Astrocyte of the cerebellum (primary cell): ENCODE measurements at regions of chr9 and their contacts with region 1.

Region 1: DNA sequence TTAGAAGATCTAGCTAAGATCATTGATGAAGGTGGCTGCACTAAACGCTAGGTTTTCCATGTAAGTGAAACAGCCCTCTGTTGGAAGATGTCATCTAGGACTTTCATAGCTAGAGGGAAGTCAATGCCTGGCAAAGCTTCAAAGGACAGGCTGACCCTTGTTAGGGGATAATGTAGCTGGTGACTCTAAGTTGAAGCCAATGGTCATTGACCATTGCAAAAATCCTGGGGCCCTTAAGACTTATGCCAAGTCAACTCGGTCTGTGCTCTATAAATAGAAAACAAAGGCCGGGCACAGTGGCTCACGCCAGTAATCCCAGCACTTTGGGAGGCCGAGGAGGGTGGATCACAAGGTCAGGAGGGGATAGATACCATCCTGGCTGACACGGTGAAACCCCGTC is 26.6 kb upstream of the FIBCD1 start:
- DNase-seq: no peak
- H3K4me3 ChIP-seq: no peak overlapping the region
- CTCF ChIP-seq: no peak

Region 2: GRCh38 chr9:130901498-130902203 is 64.0 kb before region 1 on chr9:
- in situ Hi-C with region 1: loop called (anchors 5 kb)
- DNase-seq: no peak
- H3K4me3 ChIP-seq: no peak overlapping the region
- CTCF ChIP-seq: no peak

Region 3: DNA sequence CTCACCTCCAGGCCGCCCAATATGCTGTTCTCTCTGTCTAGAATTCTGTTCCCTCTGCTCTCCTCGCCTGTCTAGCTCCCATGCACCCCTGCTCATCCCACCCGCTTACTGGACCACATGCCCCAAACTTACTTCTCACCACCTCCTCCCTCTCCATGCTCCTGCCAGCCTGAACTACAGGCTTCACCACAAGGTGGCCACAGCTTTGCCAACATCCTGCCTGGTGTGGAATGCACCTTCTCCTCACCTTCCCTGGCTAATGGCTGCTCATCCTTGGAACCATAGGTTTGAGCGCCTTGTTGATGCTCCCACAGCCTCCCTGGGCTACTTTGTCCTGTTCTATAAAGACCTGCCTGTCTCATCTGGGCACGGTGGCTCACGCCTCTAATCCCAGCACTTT is 52.9 kb after region 1 on chr9:
- in situ Hi-C with region 1: no loop called
- DNase-seq: no peak
- H3K4me3 ChIP-seq: no peak overlapping the region
- CTCF ChIP-seq: peak; percentile 5